GM12878 (cell line): ENCODE measurements at regions of chr11 and their contacts with region 1.

Region 1: DNA sequence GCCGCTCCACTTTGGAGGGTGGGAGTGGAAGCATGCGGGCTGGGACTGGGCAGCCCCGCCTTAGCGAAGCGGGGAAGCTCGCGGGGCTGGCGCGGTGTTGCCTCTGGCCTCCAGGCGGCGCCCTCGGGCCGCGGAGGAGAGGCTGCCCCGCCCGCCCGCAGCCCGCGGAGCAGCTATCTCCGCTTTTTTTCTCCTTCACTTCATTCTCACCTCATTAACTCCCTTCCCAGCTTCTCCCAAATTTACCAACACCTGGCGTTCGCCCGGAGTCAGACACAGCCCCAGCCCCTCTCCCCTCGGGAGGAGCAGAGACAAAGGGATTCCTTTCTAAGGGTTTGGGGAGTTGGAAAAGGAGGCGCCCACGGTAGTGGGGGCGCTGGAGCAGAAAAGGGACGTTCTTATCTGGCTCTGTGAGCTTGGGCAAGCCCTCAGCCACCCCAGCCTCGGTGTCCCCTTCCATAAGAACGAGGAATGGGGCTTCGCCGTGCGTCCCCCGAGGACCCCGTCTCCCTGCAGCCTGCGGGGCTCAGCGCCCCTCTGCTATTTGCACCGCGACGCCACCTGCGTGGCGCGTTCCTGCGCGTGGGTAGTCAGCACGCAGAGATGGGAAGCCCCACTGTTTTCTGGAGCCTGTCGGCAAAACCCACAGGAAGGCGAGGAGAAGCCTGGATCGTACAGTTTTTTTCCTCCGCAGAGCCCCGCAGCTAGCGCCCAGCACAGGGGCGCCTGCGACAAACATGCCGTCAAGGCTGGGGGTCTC is 1.5 kb upstream of the WNT11 start:
- DNase-seq: no peak
- ATAC-seq: peak; percentile 83
- H3K4me3 ChIP-seq: peak overlapping the region; percentile 56
- H3K27ac ChIP-seq: no peak overlapping the region
- H3K4me1 ChIP-seq: peaks cover 17% of the 10 kb centered on the region
- H3K27me3 ChIP-seq: peaks cover 33 to 49% of the 10 kb centered on the region in 2 experiments
- CTCF ChIP-seq: peak; percentile 94 to 98 (median 94); a peak in 5 of 6 replicates
- EP300 ChIP-seq: no peak
- POLR2A ChIP-seq: no peak
- RAD21 ChIP-seq: peak; percentile 83

Region 2: GRCh38 chr11:75896843-75897419 is 310.9 kb before region 1 on chr11:
- CTCF ChIA-PET with region 1: interaction called, 26 read pairs
- POLR2A ChIA-PET with region 1: interaction called, 5 read pairs
- RAD21 ChIA-PET with region 1: interaction called, 7 read pairs
- SMC1A ChIA-PET with region 1: interaction called, 11 read pairs
- in situ Hi-C with region 1: no loop called
- intact Hi-C with region 1: loop called (anchors 2 kb)
- DNase-seq: no peak
- ATAC-seq: peak; percentile 46
- H3K4me3 ChIP-seq: no peak overlapping the region
- H3K27ac ChIP-seq: no peak overlapping the region
- H3K4me1 ChIP-seq: peaks cover 8% of the 10 kb centered on the region
- H3K27me3 ChIP-seq: no peaks in the 10 kb centered on the region
- CTCF ChIP-seq: peak; percentile 55 to 62 (median 57)
- EP300 ChIP-seq: no peak
- POLR2A ChIP-seq: no peak
- RAD21 ChIP-seq: peak; percentile 77

Region 3: GRCh38 chr11:76235233-76236091 is 27.6 kb after region 1 on chr11:
- CTCF ChIA-PET with region 1: interaction called, 36 read pairs
- POLR2A ChIA-PET with region 1: interaction called, 3 read pairs
- RAD21 ChIA-PET with region 1: interaction called, 44 read pairs
- SMC1A ChIA-PET with region 1: interaction called, 18 read pairs
- in situ Hi-C with region 1: no loop called
- intact Hi-C with region 1: loop called (anchors 2 kb)
- DNase-seq: peak; percentile 93
- ATAC-seq: peak; percentile 85
- H3K4me3 ChIP-seq: peak overlapping the region; percentile 80
- H3K27ac ChIP-seq: peak overlapping the region; percentile 73
- H3K4me1 ChIP-seq: peaks cover 34% of the 10 kb centered on the region
- H3K27me3 ChIP-seq: peaks cover 0 to 1% of the 10 kb centered on the region in 2 experiments; a peak in 1 of 4 replicates
- CTCF ChIP-seq: no peak
- EP300 ChIP-seq: peak in 1 of 2 experiments; percentile 73; a peak in 1 of 4 replicates
- POLR2A ChIP-seq: peak; percentile 77
- RAD21 ChIP-seq: no peak

Region 4: DNA sequence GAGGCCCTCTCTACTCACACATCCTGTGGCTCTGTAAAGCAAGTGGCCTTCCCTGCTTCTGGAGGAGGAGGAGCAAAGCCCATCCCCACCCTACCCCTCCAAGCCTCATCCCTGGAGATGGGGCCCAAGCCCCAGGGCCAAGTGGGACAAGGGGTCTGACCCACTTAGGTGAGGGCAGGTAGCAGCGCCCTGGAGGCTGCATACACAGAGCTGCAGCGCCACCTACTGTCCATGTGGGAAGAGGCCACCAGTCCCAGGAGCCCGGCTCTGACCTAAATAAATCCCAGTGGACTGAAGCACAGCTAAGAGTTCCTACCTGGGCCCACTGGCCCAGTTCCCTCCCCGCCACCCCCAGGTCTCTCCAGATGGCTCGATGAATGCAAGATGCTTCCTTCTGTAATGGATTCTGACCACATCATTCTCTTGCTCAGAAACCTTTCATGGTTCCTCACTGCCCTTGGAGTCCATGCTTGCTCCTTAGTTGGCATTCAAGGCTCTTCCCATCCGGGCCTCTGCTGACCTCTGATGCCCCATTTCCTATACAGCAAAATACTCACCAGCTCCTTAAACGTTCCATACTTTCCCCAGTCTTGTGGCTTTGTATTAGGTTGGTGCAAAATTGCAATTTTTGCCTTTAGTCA is 111.0 kb after region 1 on chr11:
- CTCF ChIA-PET with region 1: interaction called, 131 read pairs
- POLR2A ChIA-PET with region 1: no interaction called
- RAD21 ChIA-PET with region 1: interaction called, 147 read pairs
- SMC1A ChIA-PET with region 1: interaction called, 61 read pairs
- in situ Hi-C with region 1: loop called (anchors 5 kb)
- intact Hi-C with region 1: loop called (anchors 1 kb)
- DNase-seq: peak; percentile 30
- ATAC-seq: peak; percentile 99
- H3K4me3 ChIP-seq: no peak overlapping the region
- H3K27ac ChIP-seq: no peak overlapping the region
- H3K4me1 ChIP-seq: no peaks in the 10 kb centered on the region
- H3K27me3 ChIP-seq: peaks cover 16 to 27% of the 10 kb centered on the region in 2 experiments
- CTCF ChIP-seq: peak; percentile 92 to 98 (median 92)
- EP300 ChIP-seq: no peak
- POLR2A ChIP-seq: no peak
- RAD21 ChIP-seq: peak; percentile 95

Region 5: GRCh38 chr11:76512851-76513653 is 305.2 kb after region 1 on chr11:
- CTCF ChIA-PET with region 1: interaction called, 31 read pairs
- POLR2A ChIA-PET with region 1: no interaction called
- RAD21 ChIA-PET with region 1: interaction called, 4 read pairs
- SMC1A ChIA-PET with region 1: interaction called, 5 read pairs
- in situ Hi-C with region 1: no loop called
- intact Hi-C with region 1: loop called (anchors 10 kb)
- DNase-seq: no peak
- ATAC-seq: no peak
- H3K4me3 ChIP-seq: no peak overlapping the region
- H3K27ac ChIP-seq: no peak overlapping the region
- H3K4me1 ChIP-seq: no peaks in the 10 kb centered on the region
- H3K27me3 ChIP-seq: no peaks in the 10 kb centered on the region
- CTCF ChIP-seq: peak in 2 of 3 experiments; percentile 7 to 24; a peak in 2 of 6 replicates
- EP300 ChIP-seq: no peak
- POLR2A ChIP-seq: no peak
- RAD21 ChIP-seq: peak; percentile 54